ENCODE measurements at regions of chr1 and their contacts with region 1.

Region 1: GRCh38 chr1:84427520-84428188 is 29.4 kb downstream of the DNASE2B start:
- DNase-seq: no peak
- H3K4me3 ChIP-seq: no peak overlapping the region
- H3K27ac ChIP-seq: no peak overlapping the region
- H3K4me1 ChIP-seq: no peaks in the 10 kb centered on the region
- CTCF ChIP-seq: no peak

Region 2: GRCh38 chr1:84236256-84236655 is 191.4 kb before region 1 on chr1:
- CTCF ChIA-PET with region 1: no interaction called
- POLR2A ChIA-PET with region 1: no interaction called
- intact Hi-C with region 1: no loop called
- DNase-seq: no peak
- H3K4me3 ChIP-seq: no peak overlapping the region
- H3K27ac ChIP-seq: no peak overlapping the region
- H3K4me1 ChIP-seq: peaks cover 9% of the 10 kb centered on the region
- CTCF ChIP-seq: no peak

Region 3: GRCh38 chr1:84253891-84254290 is 173.8 kb before region 1 on chr1:
- CTCF ChIA-PET with region 1: no interaction called
- POLR2A ChIA-PET with region 1: no interaction called
- intact Hi-C with region 1: loop called (anchors 10 kb)
- DNase-seq: no peak
- H3K4me3 ChIP-seq: no peak overlapping the region
- H3K27ac ChIP-seq: no peak overlapping the region
- H3K4me1 ChIP-seq: no peaks in the 10 kb centered on the region
- CTCF ChIP-seq: no peak

Region 4: DNA sequence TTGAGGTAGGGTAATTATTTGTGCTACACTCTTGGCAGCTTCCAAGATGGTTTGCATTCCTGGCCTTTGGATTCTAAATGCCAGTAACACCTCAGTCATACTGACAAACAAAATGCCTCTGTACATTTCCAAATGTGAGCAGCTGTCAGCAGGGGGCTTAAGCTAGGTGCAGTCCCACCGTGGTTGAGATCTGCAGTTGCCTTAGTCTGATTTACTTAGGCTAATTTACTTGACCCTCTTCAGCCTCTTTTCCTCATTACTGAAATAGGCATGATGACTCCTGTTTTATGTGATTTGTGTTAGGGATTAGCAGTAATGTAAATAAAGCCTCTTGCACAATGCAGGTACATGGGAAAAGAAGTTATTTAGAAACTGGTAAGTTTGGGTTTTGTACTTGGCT is 65.1 kb after region 1 on chr1:
- CTCF ChIA-PET with region 1: no interaction called
- POLR2A ChIA-PET with region 1: no interaction called
- intact Hi-C with region 1: no loop called
- DNase-seq: no peak
- H3K4me3 ChIP-seq: no peak overlapping the region
- H3K27ac ChIP-seq: no peak overlapping the region
- H3K4me1 ChIP-seq: no peaks in the 10 kb centered on the region
- CTCF ChIP-seq: no peak